ENCODE measurements at regions of chr7 and their contacts with region 1.

Region 1: GRCh38 chr7:155598810-155599210 is 45.7 kb upstream of the RBM33 start:
- DNase-seq: peak; percentile 81
- ATAC-seq: peak; percentile 80
- H3K4me3 ChIP-seq: no peak overlapping the region
- H3K4me3 Mint-ChIP-seq: no peak overlapping the region
- H3K27ac ChIP-seq: no peak overlapping the region
- H3K27ac Mint-ChIP-seq: no peak overlapping the region
- H3K4me1 ChIP-seq: peaks cover 3 to 4% of the 10 kb centered on the region in 2 donors
- H3K4me1 Mint-ChIP-seq: peaks cover 3% of the 10 kb centered on the region
- H3K27me3 ChIP-seq: peaks cover 0 to 10% (median 8%) of the 10 kb centered on the region in 4 experiments
- H3K27me3 Mint-ChIP-seq: peaks cover 29% of the 10 kb centered on the region
- CTCF ChIP-seq: peak; percentile 99

Region 2: GRCh38 chr7:155277690-155277994 is 321.2 kb before region 1 on chr7:
- CTCF ChIA-PET with region 1: no interaction called
- POLR2A ChIA-PET with region 1: no interaction called
- intact Hi-C with region 1: no loop called
- DNase-seq: no peak
- ATAC-seq: no peak
- H3K4me3 ChIP-seq: no peak overlapping the region
- H3K4me3 Mint-ChIP-seq: no peak overlapping the region
- H3K27ac ChIP-seq: no peak overlapping the region
- H3K27ac Mint-ChIP-seq: no peak overlapping the region
- H3K4me1 ChIP-seq: peaks cover 4 to 6% of the 10 kb centered on the region in 2 donors
- H3K4me1 Mint-ChIP-seq: peaks cover 6% of the 10 kb centered on the region
- H3K27me3 ChIP-seq: no peaks in the 10 kb centered on the region
- H3K27me3 Mint-ChIP-seq: peaks cover 26% of the 10 kb centered on the region
- CTCF ChIP-seq: no peak

Region 3: DNA sequence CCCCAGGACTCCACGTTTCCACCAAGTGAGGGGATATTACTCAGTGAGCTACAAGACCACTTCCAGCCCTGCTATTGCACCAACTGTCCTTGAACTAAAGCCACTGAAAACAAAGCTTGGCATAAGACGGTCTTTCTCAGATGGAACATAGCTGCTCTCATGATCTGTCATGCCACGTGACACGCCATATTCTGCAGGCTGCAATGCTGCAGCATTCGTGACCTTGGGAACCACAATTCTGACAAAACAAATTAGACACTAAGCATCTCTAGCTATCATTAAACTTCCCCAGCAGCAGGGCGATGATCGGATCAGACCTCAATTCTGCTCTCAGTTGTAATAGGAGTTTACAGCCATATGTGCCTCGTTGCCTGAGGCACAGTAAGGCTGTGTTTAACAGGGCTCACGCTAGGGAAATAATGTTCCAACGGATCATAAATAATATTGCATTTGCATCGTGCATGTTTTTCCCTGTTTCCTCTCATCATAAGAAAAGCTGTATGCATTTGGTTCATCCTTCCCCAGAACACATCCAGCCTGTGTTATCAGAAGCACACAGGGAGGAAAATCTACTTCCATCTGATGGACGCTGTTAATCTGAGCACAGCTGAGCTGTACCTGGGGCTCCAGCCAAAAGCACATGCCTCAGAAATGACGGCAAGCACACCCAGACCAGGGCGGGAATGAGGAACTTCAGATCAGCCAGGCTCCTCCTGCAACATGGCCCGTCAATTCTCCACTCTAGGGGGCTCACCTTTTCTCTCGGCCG is 13.9 kb before region 1 on chr7:
- CTCF ChIA-PET with region 1: interaction called, 13 read pairs
- POLR2A ChIA-PET with region 1: no interaction called
- intact Hi-C with region 1: no loop called
- DNase-seq: no peak
- ATAC-seq: no peak
- H3K4me3 ChIP-seq: no peak overlapping the region
- H3K4me3 Mint-ChIP-seq: no peak overlapping the region
- H3K27ac ChIP-seq: no peak overlapping the region
- H3K27ac Mint-ChIP-seq: no peak overlapping the region
- H3K4me1 ChIP-seq: peaks cover 0 to 3% of the 10 kb centered on the region in 2 donors
- H3K4me1 Mint-ChIP-seq: no peaks in the 10 kb centered on the region
- H3K27me3 ChIP-seq: peaks cover 0 to 29% (median 0%) of the 10 kb centered on the region in 4 experiments
- H3K27me3 Mint-ChIP-seq: peaks cover 48% of the 10 kb centered on the region
- CTCF ChIP-seq: no peak

Region 4: GRCh38 chr7:155653803-155654202 is 55.0 kb after region 1 on chr7:
- CTCF ChIA-PET with region 1: interaction called, 4 read pairs
- POLR2A ChIA-PET with region 1: no interaction called
- intact Hi-C with region 1: loop called (anchors 5 kb)
- DNase-seq: no peak
- ATAC-seq: no peak
- H3K4me3 ChIP-seq: no peak overlapping the region
- H3K4me3 Mint-ChIP-seq: no peak overlapping the region
- H3K27ac ChIP-seq: no peak overlapping the region
- H3K27ac Mint-ChIP-seq: no peak overlapping the region
- H3K4me1 ChIP-seq: peaks cover 34 to 35% of the 10 kb centered on the region in 2 donors
- H3K4me1 Mint-ChIP-seq: peaks cover 72% of the 10 kb centered on the region
- H3K27me3 ChIP-seq: no peaks in the 10 kb centered on the region
- H3K27me3 Mint-ChIP-seq: no peaks in the 10 kb centered on the region
- CTCF ChIP-seq: no peak

Region 5: GRCh38 chr7:155724327-155725005 is 125.7 kb after region 1 on chr7:
- CTCF ChIA-PET with region 1: interaction called, 33 read pairs
- POLR2A ChIA-PET with region 1: no interaction called
- intact Hi-C with region 1: loop called (anchors 5 kb)
- DNase-seq: peak; percentile 70
- ATAC-seq: peak; percentile 44
- H3K4me3 ChIP-seq: peak overlapping the region in 4 of 5 experiments; percentile 18 to 57 (median 36)
- H3K4me3 Mint-ChIP-seq: peak overlapping the region; percentile 81
- H3K27ac ChIP-seq: peak overlapping the region; percentile 88 to 97
- H3K27ac Mint-ChIP-seq: peak overlapping the region; percentile 88
- H3K4me1 ChIP-seq: peaks cover 49 to 59% of the 10 kb centered on the region in 2 donors
- H3K4me1 Mint-ChIP-seq: peaks cover 77% of the 10 kb centered on the region
- H3K27me3 ChIP-seq: no peaks in the 10 kb centered on the region
- H3K27me3 Mint-ChIP-seq: no peaks in the 10 kb centered on the region
- CTCF ChIP-seq: peak; percentile 43

Region 6: GRCh38 chr7:155746188-155746587 is 147.4 kb after region 1 on chr7:
- CTCF ChIA-PET with region 1: interaction called, 242 read pairs
- POLR2A ChIA-PET with region 1: interaction called, 3 read pairs
- intact Hi-C with region 1: no loop called
- DNase-seq: no peak
- ATAC-seq: no peak
- H3K4me3 ChIP-seq: no peak overlapping the region
- H3K4me3 Mint-ChIP-seq: no peak overlapping the region
- H3K27ac ChIP-seq: no peak overlapping the region
- H3K27ac Mint-ChIP-seq: no peak overlapping the region
- H3K4me1 ChIP-seq: no peaks in the 10 kb centered on the region
- H3K4me1 Mint-ChIP-seq: peaks cover 42% of the 10 kb centered on the region
- H3K27me3 ChIP-seq: no peaks in the 10 kb centered on the region
- H3K27me3 Mint-ChIP-seq: no peaks in the 10 kb centered on the region
- CTCF ChIP-seq: no peak

Region 7: DNA sequence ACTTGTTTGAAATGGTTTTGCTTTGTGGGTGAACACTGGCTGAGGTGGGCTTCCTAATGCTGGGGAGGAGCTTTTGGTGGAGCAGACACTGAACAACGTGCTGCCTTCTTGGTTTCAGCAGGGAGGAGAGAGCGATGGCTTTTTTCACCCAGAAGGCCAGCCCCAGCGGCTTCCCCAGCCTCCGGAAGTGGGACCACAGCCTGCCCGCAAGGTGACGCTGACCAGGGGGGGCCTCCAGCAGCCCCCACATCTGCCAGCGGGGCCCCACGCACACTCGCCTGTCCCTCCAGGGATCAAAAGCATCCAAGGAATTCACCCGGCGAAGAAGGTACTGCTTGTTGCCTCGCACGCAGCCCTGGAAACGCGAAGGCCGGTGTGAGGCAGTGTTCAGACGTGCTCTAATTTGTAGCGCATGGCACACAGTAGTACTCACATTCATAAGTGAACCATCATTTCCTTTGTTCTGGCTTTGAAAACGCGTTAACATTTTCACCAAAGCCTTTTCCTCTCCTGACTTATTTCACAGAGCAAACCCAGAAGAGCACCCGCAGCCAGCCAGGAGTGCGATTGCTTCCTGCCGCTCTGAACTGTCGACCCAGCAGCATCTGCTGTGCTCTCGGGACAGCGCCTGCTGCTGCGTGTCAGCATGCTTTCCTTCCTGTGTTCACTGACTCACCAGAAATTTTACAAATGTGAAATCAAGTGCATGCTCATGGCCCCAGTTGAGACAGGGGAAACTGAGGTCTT is 165.1 kb after region 1 on chr7:
- CTCF ChIA-PET with region 1: interaction called, 199 read pairs
- POLR2A ChIA-PET with region 1: no interaction called
- intact Hi-C with region 1: loop called (anchors 1 kb)
- DNase-seq: peak; percentile 47
- ATAC-seq: peak; percentile 60
- H3K4me3 ChIP-seq: peak overlapping the region in 2 of 5 experiments; percentile 7 to 17
- H3K4me3 Mint-ChIP-seq: peak overlapping the region; percentile 78
- H3K27ac ChIP-seq: peak overlapping the region; percentile 0 to 60
- H3K27ac Mint-ChIP-seq: peak overlapping the region; percentile 74
- H3K4me1 ChIP-seq: peaks cover 18 to 20% of the 10 kb centered on the region in 2 donors
- H3K4me1 Mint-ChIP-seq: peaks cover 35% of the 10 kb centered on the region
- H3K27me3 ChIP-seq: no peaks in the 10 kb centered on the region
- H3K27me3 Mint-ChIP-seq: no peaks in the 10 kb centered on the region
- CTCF ChIP-seq: no peak